Sigmoid colon (tissue), 7 donors: ENCODE measurements at regions of chr3 and their contacts with region 1.

Region 1: GRCh38 chr3:148379763-148380382 is 317.8 kb upstream of the AGTR1 start:
- DNase-seq: no peak
- H3K4me3 ChIP-seq: no peak overlapping the region
- H3K27ac ChIP-seq: no peak overlapping the region
- H3K4me1 ChIP-seq: no peaks in the 10 kb centered on the region
- H3K27me3 ChIP-seq: no peaks in the 10 kb centered on the region
- CTCF ChIP-seq: peak; percentile 25 to 59 (median 54)
- EP300 ChIP-seq: no peak
- POLR2A ChIP-seq: no peak

Region 2: GRCh38 chr3:147760941-147761340 is 618.9 kb before region 1 on chr3:
- intact Hi-C with region 1: no loop called
- DNase-seq: no peak
- H3K4me3 ChIP-seq: no peak overlapping the region
- H3K27ac ChIP-seq: no peak overlapping the region
- H3K4me1 ChIP-seq: peaks cover 0 to 52% (median 37%) of the 10 kb centered on the region in 4 donors
- H3K27me3 ChIP-seq: no peaks in the 10 kb centered on the region
- CTCF ChIP-seq: no peak
- EP300 ChIP-seq: no peak
- POLR2A ChIP-seq: no peak

Region 3: DNA sequence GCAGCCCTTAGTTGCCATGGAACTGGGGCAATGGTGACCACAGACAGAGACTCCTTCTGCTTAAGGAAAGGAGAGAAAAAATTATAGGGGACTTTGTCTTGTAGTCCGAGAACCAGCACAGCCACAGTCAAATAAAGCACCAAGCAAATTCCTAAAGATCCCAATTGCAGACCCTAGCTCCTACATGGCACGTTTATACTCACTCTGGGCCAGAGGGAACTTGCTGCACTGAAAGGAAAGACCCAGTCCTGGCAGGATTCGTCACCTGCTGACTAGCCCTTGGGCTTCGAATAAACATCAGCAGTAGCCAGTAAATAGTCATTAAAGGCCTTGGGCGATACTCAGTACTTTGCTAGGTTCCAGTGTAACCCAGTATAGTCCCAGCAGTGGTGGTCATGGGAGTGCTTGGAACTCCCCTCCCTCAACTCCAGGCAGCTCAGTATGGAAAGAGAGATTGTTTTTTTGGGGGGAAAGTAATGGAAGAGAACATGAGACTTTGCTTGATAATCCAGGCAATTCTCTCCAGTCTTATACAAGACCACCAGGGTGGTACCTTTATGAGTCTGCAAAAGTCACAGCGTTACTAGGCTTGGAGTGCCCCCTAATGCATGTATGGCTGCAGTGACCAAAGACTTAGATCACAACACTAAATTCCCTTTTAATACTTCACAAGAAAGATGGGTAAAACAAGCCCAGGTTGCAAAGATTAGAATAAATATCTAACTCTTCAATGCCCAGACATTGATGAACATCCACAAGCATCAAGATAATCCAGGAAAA is 251.4 kb after region 1 on chr3:
- intact Hi-C with region 1: loop called (anchors 10 kb)
- DNase-seq: no peak
- H3K4me3 ChIP-seq: no peak overlapping the region
- H3K27ac ChIP-seq: no peak overlapping the region
- H3K4me1 ChIP-seq: no peaks in the 10 kb centered on the region
- H3K27me3 ChIP-seq: no peaks in the 10 kb centered on the region
- CTCF ChIP-seq: peak in 1 of 4 experiments; percentile 15
- EP300 ChIP-seq: no peak
- POLR2A ChIP-seq: no peak

Region 4: DNA sequence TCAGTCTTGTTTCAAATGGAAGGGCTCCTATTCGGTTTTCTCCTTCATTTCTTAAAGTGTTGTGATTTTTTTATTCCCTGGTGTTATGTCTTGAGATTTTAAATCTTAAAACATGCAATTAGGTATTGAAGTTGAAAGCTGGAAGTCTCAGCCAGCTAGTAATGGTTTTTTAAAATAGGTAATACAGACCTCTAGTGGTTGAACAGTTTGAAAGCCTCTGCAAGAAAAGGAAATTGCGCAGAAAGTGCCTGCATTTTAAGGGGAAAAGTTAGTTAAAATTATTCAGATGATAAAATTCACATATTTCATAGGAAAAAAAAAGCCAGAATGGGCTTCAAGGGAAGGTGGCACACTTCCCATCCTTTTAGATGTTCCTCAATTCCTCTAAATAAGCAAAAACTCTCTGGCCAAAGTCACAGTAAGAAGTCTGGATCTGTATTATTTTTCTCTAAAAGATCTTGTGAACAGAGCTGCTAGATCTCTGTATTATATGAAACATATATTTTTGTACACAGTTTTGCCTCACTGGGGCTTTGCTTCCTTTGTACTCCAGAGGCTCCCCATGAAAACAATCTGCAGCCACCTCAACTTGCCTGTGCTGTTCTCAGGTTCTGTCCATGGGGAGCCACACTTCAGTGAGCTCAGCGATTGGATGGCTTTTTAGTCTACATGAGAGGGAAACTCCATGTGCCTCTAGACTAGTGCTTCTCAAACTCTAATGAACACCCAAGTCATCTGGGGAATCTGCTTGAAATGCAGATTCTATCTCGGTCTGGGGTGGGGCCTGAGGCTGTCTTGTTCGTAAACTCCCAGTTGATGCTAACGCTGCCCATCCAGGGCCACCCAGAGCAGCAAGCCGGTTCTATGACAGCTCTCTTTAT is 339.3 kb after region 1 on chr3:
- intact Hi-C with region 1: loop called (anchors 1 kb)
- DNase-seq: no peak
- H3K4me3 ChIP-seq: no peak overlapping the region
- H3K27ac ChIP-seq: peak overlapping the region in 2 of 4 donors; percentile 45 to 47
- H3K4me1 ChIP-seq: peaks cover 0 to 76% (median 38%) of the 10 kb centered on the region in 4 donors
- H3K27me3 ChIP-seq: no peaks in the 10 kb centered on the region
- CTCF ChIP-seq: peak in 2 of 4 experiments; percentile 25 to 52
- EP300 ChIP-seq: no peak
- POLR2A ChIP-seq: no peak